ENCODE measurements at regions of chr1 and their contacts with region 1.

Region 1: GRCh38 chr1:88608139-88608943 is 75.7 kb upstream of the PKN2 start:
- DNase-seq: peak in 1 of 2 experiments; percentile 57
- H3K4me3 ChIP-seq: no peak overlapping the region
- H3K27ac ChIP-seq: no peak overlapping the region
- H3K4me1 ChIP-seq: peaks cover 21% of the 10 kb centered on the region
- H3K27me3 ChIP-seq: no peaks in the 10 kb centered on the region
- CTCF ChIP-seq: peak; percentile 88

Region 2: GRCh38 chr1:88079036-88079435 is 529.3 kb before region 1 on chr1:
- CTCF ChIA-PET with region 1: no interaction called
- POLR2A ChIA-PET with region 1: interaction called, 36 read pairs
- intact Hi-C with region 1: no loop called
- DNase-seq: no peak
- H3K4me3 ChIP-seq: no peak overlapping the region
- H3K27ac ChIP-seq: no peak overlapping the region
- H3K4me1 ChIP-seq: peaks cover 18% of the 10 kb centered on the region
- H3K27me3 ChIP-seq: no peaks in the 10 kb centered on the region
- CTCF ChIP-seq: peak; percentile 46; the same call in 1 of the 2 replicates

Region 3: DNA sequence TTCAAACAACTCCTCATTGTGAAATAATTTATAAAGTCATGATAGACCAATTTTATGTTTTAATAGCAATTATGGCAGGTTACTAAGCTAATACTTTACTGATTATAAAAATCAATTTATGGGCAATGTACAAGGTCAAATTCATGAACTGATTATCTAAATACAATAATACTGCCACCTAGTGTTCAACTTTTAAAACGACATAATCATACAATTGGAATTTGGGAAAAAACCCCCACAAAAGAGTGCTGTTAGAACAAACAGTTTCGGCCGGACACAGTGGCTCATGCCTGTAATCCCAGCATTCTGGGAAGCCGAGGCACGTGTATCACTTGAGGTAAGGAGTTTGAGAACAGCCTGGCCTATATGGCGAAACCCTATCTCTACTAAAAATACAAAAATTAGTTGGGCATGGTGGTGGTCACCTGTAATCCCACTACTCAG is 269.1 kb after region 1 on chr1:
- CTCF ChIA-PET with region 1: interaction called, 4 read pairs
- POLR2A ChIA-PET with region 1: no interaction called
- intact Hi-C with region 1: loop called (anchors 1 kb)
- DNase-seq: peak in 1 of 2 experiments; percentile 53
- H3K4me3 ChIP-seq: no peak overlapping the region
- H3K27ac ChIP-seq: 0 out of 2 replicates have a peak overlapping the region, but pooled peaks have one; percentile 3
- H3K4me1 ChIP-seq: peaks cover 5% of the 10 kb centered on the region; the same call in 1 of the 2 replicates
- H3K27me3 ChIP-seq: no peaks in the 10 kb centered on the region
- CTCF ChIP-seq: peak; percentile 94

Region 4: GRCh38 chr1:89310505-89310904 is 702.2 kb after region 1 on chr1:
- CTCF ChIA-PET with region 1: no interaction called
- POLR2A ChIA-PET with region 1: interaction called, 17 read pairs
- intact Hi-C with region 1: no loop called
- DNase-seq: no peak
- H3K4me3 ChIP-seq: no peak overlapping the region
- H3K27ac ChIP-seq: no peak overlapping the region
- H3K4me1 ChIP-seq: peaks cover 32% of the 10 kb centered on the region
- H3K27me3 ChIP-seq: no peaks in the 10 kb centered on the region
- CTCF ChIP-seq: no peak

Measured in PC-9 (cell line).